ENCODE measurements at regions of chr1 and their contacts with region 1.

Region 1: DNA sequence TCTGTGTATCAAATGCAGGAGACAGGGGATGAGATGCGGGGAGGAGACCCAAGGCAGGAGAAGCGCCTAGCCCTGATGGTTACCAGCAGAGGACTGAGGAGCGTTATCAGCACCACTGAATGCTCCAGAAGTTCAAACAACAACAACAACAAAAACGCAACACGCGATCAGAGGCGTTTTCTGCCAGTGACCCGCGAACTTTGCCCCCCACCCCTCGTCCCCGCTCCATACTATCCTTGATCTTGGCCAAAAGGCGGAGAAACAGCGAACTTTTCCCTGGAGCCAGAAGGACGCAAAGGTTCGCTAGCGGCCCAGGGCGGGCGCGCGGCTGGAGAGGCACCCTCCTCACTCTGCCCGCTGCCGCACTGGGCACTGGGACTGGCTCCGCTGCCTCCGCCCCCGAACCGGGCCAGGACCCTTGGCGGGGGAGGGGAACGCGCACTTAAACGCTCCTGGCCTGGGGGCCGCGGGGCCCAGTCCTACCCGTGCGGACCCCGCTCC is 699 bp downstream of the ECHDC2 start:
- DNase-seq: no peak
- ATAC-seq: no peak
- H3K4me3 Mint-ChIP-seq: peak overlapping the region; percentile 78
- H3K27ac Mint-ChIP-seq: no peak overlapping the region
- H3K4me1 Mint-ChIP-seq: peaks cover 27% of the 10 kb centered on the region
- H3K27me3 Mint-ChIP-seq: no peaks in the 10 kb centered on the region

Region 2: GRCh38 chr1:52877554-52877953 is 43.3 kb before region 1 on chr1:
- CTCF ChIA-PET with region 1: no interaction called
- POLR2A ChIA-PET with region 1: no interaction called
- DNase-seq: no peak
- ATAC-seq: no peak
- H3K4me3 Mint-ChIP-seq: no peak overlapping the region
- H3K27ac Mint-ChIP-seq: no peak overlapping the region
- H3K4me1 Mint-ChIP-seq: no peaks in the 10 kb centered on the region
- H3K27me3 Mint-ChIP-seq: no peaks in the 10 kb centered on the region

Region 3: GRCh38 chr1:53190210-53190611 is 269.4 kb after region 1 on chr1:
- CTCF ChIA-PET with region 1: interaction called, 10 read pairs
- POLR2A ChIA-PET with region 1: interaction called, 4 read pairs
- DNase-seq: no peak
- ATAC-seq: no peak
- H3K4me3 Mint-ChIP-seq: no peak overlapping the region
- H3K27ac Mint-ChIP-seq: no peak overlapping the region
- H3K4me1 Mint-ChIP-seq: no peaks in the 10 kb centered on the region
- H3K27me3 Mint-ChIP-seq: peaks cover 12% of the 10 kb centered on the region